ENCODE measurements at regions of chr6 and their contacts with region 1.

Region 1: DNA sequence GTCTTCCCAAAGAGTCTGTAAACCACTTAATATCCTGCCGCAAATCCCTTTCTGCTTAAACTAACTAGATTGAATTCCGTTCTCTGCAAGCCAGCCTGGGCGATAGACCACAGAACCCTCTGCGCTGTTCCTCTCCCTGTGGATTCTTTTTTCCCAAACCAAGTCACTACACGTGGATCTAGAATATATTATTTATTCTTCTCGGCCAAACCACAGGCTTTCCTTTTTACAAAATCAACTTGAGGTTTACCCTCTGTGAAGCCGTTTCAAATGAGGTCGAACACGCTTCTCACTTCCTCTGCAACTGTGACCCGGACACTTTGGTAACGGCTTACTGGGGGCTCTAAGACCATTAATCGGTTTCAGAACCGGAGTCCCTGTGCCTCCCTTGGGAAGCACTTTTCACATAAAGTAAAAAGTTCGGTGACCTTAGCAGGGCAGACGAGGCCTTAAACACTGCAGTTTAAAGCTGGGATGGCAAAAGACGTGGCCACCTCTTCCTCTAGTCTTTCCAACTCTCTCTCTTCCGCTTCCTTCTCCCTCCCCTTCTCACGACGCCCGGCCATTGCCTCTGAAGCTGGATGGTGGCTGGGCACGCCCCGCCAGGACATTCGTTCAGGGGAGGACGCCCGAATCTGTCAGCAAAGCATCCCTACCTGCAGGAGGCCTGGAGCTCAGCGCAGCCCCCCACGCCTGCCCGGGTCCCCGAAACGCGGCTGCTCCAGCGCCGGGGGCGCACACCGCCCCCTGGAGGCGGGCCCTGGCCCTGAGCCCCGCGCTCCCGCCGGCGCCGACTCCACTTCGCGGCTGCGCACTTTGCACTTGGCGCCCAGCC is 55.0 kb upstream of the FOXC1 start:
- DNase-seq: peak; percentile 83 to 95
- ATAC-seq: peak; percentile 94
- H3K4me3 ChIP-seq: peak overlapping the region; percentile 31 to 86
- H3K27ac ChIP-seq: peak overlapping the region in 1 of 2 donors; percentile 30
- H3K4me1 ChIP-seq: peaks cover 0 to 2% of the 10 kb centered on the region in 2 donors
- H3K27me3 ChIP-seq: no peaks in the 10 kb centered on the region

Region 2: GRCh38 chr6:1396952-1397868 is 157.5 kb before region 1 on chr6:
- intact Hi-C with region 1: no loop called
- DNase-seq: peak in 1 of 2 donors; percentile 88
- ATAC-seq: no peak
- H3K4me3 ChIP-seq: no peak overlapping the region
- H3K27ac ChIP-seq: no peak overlapping the region
- H3K4me1 ChIP-seq: no peaks in the 10 kb centered on the region
- H3K27me3 ChIP-seq: peaks cover 0 to 2% of the 10 kb centered on the region in 2 donors

Region 3: DNA sequence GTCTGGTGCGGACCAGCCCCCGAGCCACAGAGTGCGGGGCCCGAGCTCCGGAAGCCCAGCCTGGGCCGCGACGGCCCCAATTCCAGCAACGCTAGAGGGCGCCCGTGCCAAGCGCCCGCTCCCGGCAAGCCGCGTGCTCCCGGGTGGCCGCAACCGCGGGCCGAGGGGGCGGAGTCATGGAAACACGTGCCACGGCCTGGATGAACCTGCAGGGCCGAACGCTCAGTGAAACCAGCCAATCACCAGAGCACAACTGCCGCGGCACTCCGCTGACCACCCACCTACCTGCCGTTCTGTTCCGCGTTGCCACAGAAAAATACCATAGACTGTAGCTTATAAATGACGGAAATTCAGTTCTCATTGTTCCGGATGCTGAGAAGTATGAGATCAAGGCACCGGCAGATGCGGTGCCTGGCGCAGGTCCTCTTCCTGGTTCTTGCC is 30.6 kb before region 1 on chr6:
- intact Hi-C with region 1: loop called in 1 of 2 experiments (anchors 2 kb)
- DNase-seq: peak; percentile 85 to 96
- ATAC-seq: peak; percentile 84
- H3K4me3 ChIP-seq: no peak overlapping the region
- H3K27ac ChIP-seq: no peak overlapping the region
- H3K4me1 ChIP-seq: no peaks in the 10 kb centered on the region
- H3K27me3 ChIP-seq: no peaks in the 10 kb centered on the region

Region 4: GRCh38 chr6:1604158-1605030 is 49.7 kb after region 1 on chr6:
- intact Hi-C with region 1: no loop called
- DNase-seq: peak; percentile 82 to 95
- ATAC-seq: peak; percentile 89
- H3K4me3 ChIP-seq: peak overlapping the region; percentile 48 to 55
- H3K27ac ChIP-seq: peak overlapping the region; percentile 94 to 100
- H3K4me1 ChIP-seq: no peaks in the 10 kb centered on the region
- H3K27me3 ChIP-seq: no peaks in the 10 kb centered on the region